Panc1 (cell line): ENCODE measurements at regions of chr6 and their contacts with region 1.

Region 1: GRCh38 chr6:30357678-30358540 is 13.0 kb downstream of the RPP21 start:
- DNase-seq: peak; percentile 30
- ATAC-seq: peak; percentile 94
- H3K4me3 ChIP-seq: peak overlapping the region; percentile 40 to 56
- H3K27ac ChIP-seq: no peak overlapping the region
- H3K4me1 ChIP-seq: no peaks in the 10 kb centered on the region
- H3K27me3 ChIP-seq: peaks cover 36% of the 10 kb centered on the region
- CTCF ChIP-seq: peak; percentile 87

Region 2: DNA sequence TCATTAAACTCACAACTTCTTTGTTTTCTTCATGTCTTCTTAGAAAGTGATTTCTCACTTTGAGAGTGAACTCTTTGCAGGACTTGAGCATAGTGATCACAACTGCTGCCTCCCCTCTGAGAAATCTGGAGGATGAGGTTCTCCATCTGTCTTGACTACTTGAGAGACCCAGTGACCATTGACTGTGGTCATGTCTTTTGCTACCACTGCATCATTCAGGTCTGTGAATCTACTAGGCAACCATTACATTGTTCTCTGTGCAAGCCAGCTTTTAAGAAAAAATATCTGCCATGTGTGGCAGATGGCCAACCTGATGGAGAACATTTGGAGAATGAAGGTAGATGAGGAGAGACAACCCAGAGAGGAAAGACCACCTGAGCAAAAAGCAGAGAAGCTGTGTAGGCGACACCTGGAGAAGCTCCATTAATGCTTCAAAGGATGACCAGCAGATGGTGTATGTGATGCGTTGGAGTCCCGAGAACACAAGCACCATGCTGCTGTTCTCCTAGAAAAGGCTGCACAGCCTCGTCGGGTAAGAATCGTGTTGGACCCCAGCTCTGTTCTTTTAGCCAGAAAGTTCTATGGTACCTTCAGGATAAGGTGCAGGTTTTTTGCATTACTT is 119.6 kb before region 1 on chr6:
- CTCF ChIA-PET with region 1: no interaction called
- POLR2A ChIA-PET with region 1: no interaction called
- in situ Hi-C with region 1: loop called (anchors 25 kb)
- intact Hi-C with region 1: no loop called
- DNase-seq: peak; percentile 22
- ATAC-seq: peak; percentile 95
- H3K4me3 ChIP-seq: no peak overlapping the region
- H3K27ac ChIP-seq: no peak overlapping the region
- H3K4me1 ChIP-seq: no peaks in the 10 kb centered on the region
- H3K27me3 ChIP-seq: peaks cover 23% of the 10 kb centered on the region
- CTCF ChIP-seq: peak; percentile 83

Region 3: GRCh38 chr6:30396833-30397479 is 39.0 kb after region 1 on chr6:
- CTCF ChIA-PET with region 1: interaction called, 5 read pairs
- POLR2A ChIA-PET with region 1: no interaction called
- in situ Hi-C with region 1: no loop called
- intact Hi-C with region 1: loop called (anchors 2 kb)
- DNase-seq: peak; percentile 33
- ATAC-seq: peak; percentile 99
- H3K4me3 ChIP-seq: no peak overlapping the region
- H3K27ac ChIP-seq: no peak overlapping the region
- H3K4me1 ChIP-seq: no peaks in the 10 kb centered on the region
- H3K27me3 ChIP-seq: peaks cover 16% of the 10 kb centered on the region
- CTCF ChIP-seq: peak; percentile 96

Region 4: GRCh38 chr6:30626484-30627366 is 268.8 kb after region 1 on chr6 and contains the start of gene ATAT1:
- CTCF ChIA-PET with region 1: no interaction called
- POLR2A ChIA-PET with region 1: no interaction called
- in situ Hi-C with region 1: no loop called
- intact Hi-C with region 1: no loop called
- DNase-seq: no peak
- ATAC-seq: peak; percentile 97
- H3K4me3 ChIP-seq: peak within 1 kb of the TSS; percentile 62 to 90
- H3K27ac ChIP-seq: peak within 1 kb of the TSS; percentile 84
- H3K4me1 ChIP-seq: 0 out of 2 replicates have a peak, but pooled peaks cover 2% of the 10 kb centered on the region
- H3K27me3 ChIP-seq: no peaks in the 10 kb centered on the region
- CTCF ChIP-seq: no peak
- total RNA-seq, gene ATAT1: 15.8 TPM